Mucosa of descending colon (tissue), 3 donors: ENCODE measurements at regions of chr7 and their contacts with region 1.

Region 1: GRCh38 chr7:8000315-8000941 is 31.8 kb downstream of the GLCCI1 start:
- DNase-seq: no peak
- ATAC-seq: no peak
- H3K4me3 ChIP-seq: no peak overlapping the region
- H3K4me1 ChIP-seq: no peaks in the 10 kb centered on the region
- CTCF ChIP-seq: no peak

Region 2: DNA sequence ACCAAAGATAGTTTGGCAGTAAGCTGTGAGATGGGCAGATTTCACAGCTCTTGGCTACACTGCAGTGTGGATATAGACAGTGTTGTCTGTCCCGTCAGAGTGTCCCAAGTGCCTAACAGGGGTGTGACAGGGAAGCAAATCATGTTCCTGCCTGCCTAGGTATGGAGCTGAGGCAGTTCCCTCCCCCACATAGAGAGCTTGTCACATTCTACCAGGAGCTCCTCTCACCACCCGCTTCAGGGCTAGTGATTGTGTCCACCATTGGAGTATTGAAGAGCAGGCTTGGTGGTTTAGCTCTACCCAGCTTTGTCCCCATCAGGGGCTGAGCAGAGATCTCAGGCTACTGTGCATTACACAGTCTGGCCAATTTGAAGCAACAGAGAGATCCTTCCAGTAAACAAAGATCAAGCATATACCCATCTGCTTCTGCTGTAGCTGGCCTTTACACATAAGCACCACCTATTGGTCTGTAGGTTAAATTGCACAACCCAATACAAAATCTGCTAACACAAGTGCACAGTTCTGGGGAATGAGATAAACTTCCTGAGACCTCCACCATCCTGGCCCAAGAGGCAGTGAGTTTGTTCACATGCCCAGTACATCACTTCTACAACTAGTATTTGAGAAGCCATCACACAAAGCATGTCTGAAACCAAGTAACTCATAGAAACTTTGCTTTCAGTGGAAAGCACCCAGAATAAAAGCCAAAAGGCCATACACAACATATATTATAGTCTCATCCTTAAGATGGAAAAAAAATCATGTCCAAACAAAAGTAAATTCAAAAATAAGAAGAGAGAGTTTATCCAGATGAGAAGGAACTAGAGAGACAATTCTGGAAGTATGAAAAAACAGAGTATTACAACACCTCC is 35.5 kb after region 1 on chr7:
- intact Hi-C with region 1: loop called in 1 of 2 experiments (anchors 2 kb)
- DNase-seq: no peak
- ATAC-seq: peak; percentile 86
- H3K4me3 ChIP-seq: no peak overlapping the region
- H3K4me1 ChIP-seq: no peaks in the 10 kb centered on the region
- CTCF ChIP-seq: no peak